ENCODE measurements at regions of chr6 and their contacts with region 1.

Region 1: DNA sequence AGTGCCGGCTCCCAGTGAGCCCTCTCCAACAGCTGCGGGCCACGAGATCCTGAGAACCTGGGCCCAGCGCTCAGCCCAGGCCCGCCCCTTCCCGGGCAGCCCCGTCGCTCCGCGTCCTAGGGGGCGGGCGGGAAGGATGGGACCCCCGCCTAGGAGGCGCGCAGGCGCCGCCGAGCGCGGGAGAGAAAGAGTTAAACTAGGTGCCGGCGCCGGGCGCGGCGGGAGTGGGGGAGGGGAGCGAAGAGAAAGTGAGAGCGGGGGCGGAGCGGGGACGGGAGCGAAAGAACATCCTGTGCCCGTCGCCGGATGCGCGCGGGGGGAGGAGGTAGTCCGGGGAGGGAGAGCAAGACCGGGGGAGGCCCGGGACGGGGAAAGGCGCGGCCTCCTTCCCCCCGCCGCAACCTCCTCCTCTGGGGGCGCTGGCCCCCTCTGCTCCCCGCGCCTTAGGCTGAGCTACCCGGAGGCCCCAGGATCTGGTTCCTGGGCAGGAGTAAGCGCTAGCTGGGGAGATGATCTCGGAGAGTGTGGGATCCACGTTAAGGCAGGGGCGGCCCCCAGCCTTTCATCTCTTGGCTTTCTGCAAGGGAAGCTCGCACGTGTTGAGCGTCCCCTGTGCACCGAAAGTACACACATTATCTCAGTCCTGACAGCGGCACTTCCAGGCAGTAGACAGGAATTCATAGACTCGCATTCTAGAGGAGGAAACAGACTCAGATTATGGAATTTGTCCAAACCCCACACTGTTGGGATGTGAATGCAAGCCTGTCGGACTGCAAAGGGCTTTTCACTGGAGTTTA is 4.9 kb upstream of the ARMC12 start:
- DNase-seq: peak; percentile 98
- ATAC-seq: peak; percentile 60
- H3K4me3 Mint-ChIP-seq: peak overlapping the region; percentile 81
- H3K27ac Mint-ChIP-seq: peak overlapping the region; percentile 94
- H3K4me1 Mint-ChIP-seq: peaks cover 74% of the 10 kb centered on the region
- H3K27me3 Mint-ChIP-seq: no peaks in the 10 kb centered on the region
- CTCF ChIP-seq: no peak

Region 2: GRCh38 chr6:35522660-35523658 is 209.0 kb before region 1 on chr6:
- CTCF ChIA-PET with region 1: interaction called, 67 read pairs
- POLR2A ChIA-PET with region 1: no interaction called
- intact Hi-C with region 1: loop called (anchors 1 kb)
- DNase-seq: peak; percentile 81
- ATAC-seq: peak; percentile 91
- H3K4me3 Mint-ChIP-seq: peak overlapping the region; percentile 63
- H3K27ac Mint-ChIP-seq: peak overlapping the region; percentile 63
- H3K4me1 Mint-ChIP-seq: peaks cover 9% of the 10 kb centered on the region
- H3K27me3 Mint-ChIP-seq: no peaks in the 10 kb centered on the region
- CTCF ChIP-seq: peak; percentile 100

Region 3: DNA sequence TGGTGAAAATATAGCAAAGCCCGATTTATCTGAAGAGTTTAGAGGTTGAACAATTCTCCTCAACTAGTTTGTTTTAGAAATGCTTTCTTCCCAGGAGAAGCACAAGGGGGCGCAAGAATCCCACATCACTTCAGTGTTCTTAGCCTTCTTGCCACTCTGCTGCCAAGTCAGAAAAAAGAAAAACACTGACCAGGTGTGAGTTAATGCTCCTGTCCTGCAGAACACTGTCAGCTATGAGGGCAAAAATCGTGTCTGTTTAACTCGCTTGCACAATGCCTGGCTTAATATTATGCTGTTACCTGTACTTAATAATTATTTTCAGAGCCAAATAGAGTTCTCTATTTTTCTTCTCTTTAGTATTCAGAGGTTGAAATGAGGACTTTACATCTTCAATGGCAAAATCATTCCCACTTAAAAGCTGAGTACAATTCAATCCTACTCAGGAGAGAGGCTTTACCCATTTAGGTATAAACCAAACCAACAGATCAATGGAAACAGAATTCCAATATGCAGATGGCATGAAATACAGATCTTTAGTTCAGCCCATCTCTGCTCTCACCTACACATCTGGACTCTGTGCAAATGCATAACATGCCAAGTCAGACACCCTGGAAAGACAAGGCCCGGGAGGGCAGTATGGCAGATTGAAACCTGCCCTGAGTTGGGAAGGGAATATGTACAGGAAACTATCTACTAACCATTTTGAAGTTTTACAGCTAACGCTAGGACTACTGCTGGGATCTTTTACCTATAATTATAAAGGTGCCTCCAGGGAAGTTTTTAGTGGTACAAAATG is 147.8 kb before region 1 on chr6:
- CTCF ChIA-PET with region 1: interaction called, 272 read pairs
- POLR2A ChIA-PET with region 1: interaction called, 4 read pairs
- intact Hi-C with region 1: loop called (anchors 1 kb)
- DNase-seq: peak; percentile 87
- ATAC-seq: peak; percentile 71
- H3K4me3 Mint-ChIP-seq: no peak overlapping the region
- H3K27ac Mint-ChIP-seq: no peak overlapping the region
- H3K4me1 Mint-ChIP-seq: peaks cover 53% of the 10 kb centered on the region
- H3K27me3 Mint-ChIP-seq: no peaks in the 10 kb centered on the region
- CTCF ChIP-seq: peak; percentile 91

Region 4: DNA sequence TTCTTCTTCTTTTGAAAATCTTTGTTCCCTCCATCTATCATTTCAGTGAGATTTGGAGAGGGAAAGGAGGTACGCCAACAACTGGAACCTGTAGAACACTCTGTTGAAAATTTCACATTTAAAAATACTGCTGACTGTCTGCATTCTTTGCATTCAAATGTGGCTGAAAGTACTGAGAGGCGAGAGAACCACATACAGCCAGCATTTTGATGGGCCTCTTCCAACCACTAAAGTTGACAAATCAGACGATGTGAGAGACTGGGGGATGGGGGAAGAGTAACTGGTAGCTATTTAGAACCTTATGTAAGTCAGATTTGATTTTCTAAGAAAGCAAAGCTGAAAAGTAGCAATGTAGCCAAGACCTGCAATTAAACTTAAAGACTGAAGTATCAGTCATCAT is 120.7 kb before region 1 on chr6:
- CTCF ChIA-PET with region 1: interaction called, 12 read pairs
- POLR2A ChIA-PET with region 1: interaction called, 5 read pairs
- intact Hi-C with region 1: no loop called
- DNase-seq: peak; percentile 71
- ATAC-seq: peak; percentile 92
- H3K4me3 Mint-ChIP-seq: no peak overlapping the region
- H3K27ac Mint-ChIP-seq: peak overlapping the region; percentile 71
- H3K4me1 Mint-ChIP-seq: peaks cover 70% of the 10 kb centered on the region
- H3K27me3 Mint-ChIP-seq: no peaks in the 10 kb centered on the region
- CTCF ChIP-seq: no peak

Region 5: GRCh38 chr6:35640017-35640664 is 91.8 kb before region 1 on chr6:
- CTCF ChIA-PET with region 1: interaction called, 38 read pairs
- POLR2A ChIA-PET with region 1: no interaction called
- intact Hi-C with region 1: no loop called
- DNase-seq: no peak
- ATAC-seq: no peak
- H3K4me3 Mint-ChIP-seq: no peak overlapping the region
- H3K27ac Mint-ChIP-seq: peak overlapping the region; percentile 8
- H3K4me1 Mint-ChIP-seq: peaks cover 64% of the 10 kb centered on the region
- H3K27me3 Mint-ChIP-seq: no peaks in the 10 kb centered on the region
- CTCF ChIP-seq: no peak

Region 6: GRCh38 chr6:35669451-35670045 is 62.4 kb before region 1 on chr6:
- CTCF ChIA-PET with region 1: interaction called, 36 read pairs
- POLR2A ChIA-PET with region 1: interaction called, 13 read pairs
- intact Hi-C with region 1: loop called (anchors 5 kb)
- DNase-seq: no peak
- ATAC-seq: peak; percentile 54
- H3K4me3 Mint-ChIP-seq: peak overlapping the region; percentile 56
- H3K27ac Mint-ChIP-seq: peak overlapping the region; percentile 91
- H3K4me1 Mint-ChIP-seq: peaks cover 40% of the 10 kb centered on the region
- H3K27me3 Mint-ChIP-seq: no peaks in the 10 kb centered on the region
- CTCF ChIP-seq: no peak

Region 7: GRCh38 chr6:35710241-35710847 is 21.6 kb before region 1 on chr6:
- CTCF ChIA-PET with region 1: interaction called, 14 read pairs
- POLR2A ChIA-PET with region 1: interaction called, 95 read pairs
- intact Hi-C with region 1: loop called (anchors 1 kb)
- DNase-seq: peak; percentile 74
- ATAC-seq: peak; percentile 95
- H3K4me3 Mint-ChIP-seq: no peak overlapping the region
- H3K27ac Mint-ChIP-seq: peak overlapping the region; percentile 51
- H3K4me1 Mint-ChIP-seq: peaks cover 30% of the 10 kb centered on the region
- H3K27me3 Mint-ChIP-seq: no peaks in the 10 kb centered on the region
- CTCF ChIP-seq: no peak

Region 8: DNA sequence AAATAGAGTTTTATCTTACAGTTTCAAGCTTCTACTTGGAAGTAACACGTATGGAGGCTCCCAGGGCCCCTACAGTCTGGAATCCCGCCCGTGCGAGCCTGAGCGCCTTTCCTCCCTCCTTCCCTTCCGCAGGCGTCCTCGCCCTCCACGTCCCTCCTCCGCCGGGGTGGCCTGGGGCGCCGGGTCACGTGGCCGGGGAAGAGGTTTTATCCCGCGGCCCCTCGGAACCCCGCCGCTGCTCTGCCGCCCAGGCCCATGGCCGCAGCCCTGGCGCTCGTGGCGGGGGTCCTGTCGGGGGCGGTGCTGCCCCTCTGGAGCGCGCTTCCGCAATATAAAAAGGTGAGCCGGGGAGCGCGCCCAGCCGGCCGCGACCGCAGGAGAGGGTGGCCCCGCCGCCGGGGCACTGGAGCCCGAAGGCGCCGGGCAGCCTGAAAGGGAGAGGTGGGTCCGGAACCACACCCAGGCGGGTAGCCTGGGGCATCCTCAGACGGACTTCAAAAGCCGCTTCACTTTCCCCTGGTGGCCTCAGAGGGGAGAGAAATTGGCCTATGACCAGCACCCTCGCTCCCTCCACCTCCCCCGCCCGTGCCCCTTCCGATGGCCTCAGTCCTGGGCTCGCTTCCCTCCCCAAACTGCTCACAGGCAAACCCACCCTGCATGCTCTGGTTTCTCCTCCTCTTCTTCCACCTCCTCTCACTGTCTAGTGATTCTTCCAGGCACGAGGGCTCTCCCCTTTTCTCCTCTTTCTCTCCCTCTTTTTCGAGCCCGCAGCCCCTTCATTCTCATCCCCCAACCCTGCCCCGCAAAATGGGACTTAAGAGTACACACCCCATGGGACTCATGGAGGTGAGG is 44.7 kb after region 1 on chr6 and contains the start of gene CLPSL2:
- CTCF ChIA-PET with region 1: no interaction called
- POLR2A ChIA-PET with region 1: no interaction called
- intact Hi-C with region 1: no loop called
- DNase-seq: peak; percentile 14
- ATAC-seq: peak; percentile 34
- H3K4me3 Mint-ChIP-seq: peak within 1 kb of the TSS; percentile 26
- H3K27ac Mint-ChIP-seq: no peak within 1 kb of the TSS
- H3K4me1 Mint-ChIP-seq: no peaks in the 10 kb centered on the region
- H3K27me3 Mint-ChIP-seq: peaks cover 27% of the 10 kb centered on the region
- CTCF ChIP-seq: no peak
- total RNA-seq, gene CLPSL2: not detected

Measured in activated CD8-positive, alpha-beta T cell treated with anti-CD3 and anti-CD28 coated beads for 36 hours (primary cell).